Activated CD4-positive, alpha-beta T cell treated with anti-CD3 and anti-CD28 coated beads, Interleukin-2, amount 10 ng/mL, durations not matched to agents 24 days and 14 days (primary cell): ENCODE measurements at regions of chr4 and their contacts with region 1.

Region 1: DNA sequence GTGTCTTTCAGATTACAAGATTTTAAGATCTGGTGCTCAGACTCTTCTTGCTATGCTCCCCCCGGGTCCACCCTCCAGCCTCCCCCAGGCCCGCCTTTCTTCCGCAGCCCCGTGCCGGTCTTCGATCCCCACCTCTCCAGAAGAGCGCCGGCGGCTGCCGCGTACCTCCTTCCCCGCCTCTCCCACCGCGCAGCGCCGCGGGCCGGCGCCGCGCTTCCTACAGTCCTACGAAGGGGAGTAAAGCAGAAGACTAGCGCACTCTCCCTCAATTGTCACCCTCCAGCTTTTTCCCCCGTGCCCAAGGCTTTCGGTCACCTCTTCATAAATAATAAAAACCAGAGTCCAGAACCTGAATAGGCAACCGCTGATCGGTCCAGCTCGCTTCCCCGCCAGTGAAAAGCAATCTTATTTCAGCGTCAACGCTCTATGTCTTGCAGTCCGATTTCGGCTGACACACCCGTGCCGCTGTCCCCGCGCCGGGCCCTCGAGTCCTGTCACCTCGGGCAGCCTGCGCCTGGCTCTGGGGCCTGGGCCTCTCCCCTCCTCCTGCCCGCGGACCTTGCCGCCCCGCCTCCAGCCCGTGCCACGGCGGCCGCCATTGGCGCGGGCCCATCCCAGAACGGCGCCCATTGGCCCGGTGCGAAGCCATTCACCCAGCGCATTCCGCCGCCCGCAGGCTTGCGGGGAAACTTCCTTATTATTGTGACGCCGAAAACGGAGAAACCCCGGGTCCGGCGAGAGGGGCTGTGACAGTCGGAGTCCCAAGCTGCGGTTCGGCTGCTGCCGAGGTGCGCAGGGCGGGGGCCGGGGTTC is at the start of gene HERC3:
- DNase-seq: peak; percentile 98
- H3K4me3 Mint-ChIP-seq: peak within 1 kb of the TSS; percentile 90
- H3K27ac Mint-ChIP-seq: peak within 1 kb of the TSS; percentile 85
- H3K4me1 Mint-ChIP-seq: peaks cover 31% of the 10 kb centered on the region
- H3K27me3 Mint-ChIP-seq: peaks cover 17% of the 10 kb centered on the region
- total RNA-seq, gene HERC3: 18.8 and 18.9 TPM in 2 replicates

Region 2: GRCh38 chr4:88007304-88008121 is 584.5 kb before region 1 on chr4 and contains the start of gene PKD2:
- intact Hi-C with region 1: loop called (anchors 10 kb)
- DNase-seq: peak; percentile 96
- H3K4me3 Mint-ChIP-seq: peak within 1 kb of the TSS; percentile 94
- H3K27ac Mint-ChIP-seq: peak within 1 kb of the TSS; percentile 88
- H3K4me1 Mint-ChIP-seq: peaks cover 31% of the 10 kb centered on the region
- H3K27me3 Mint-ChIP-seq: peaks cover 16% of the 10 kb centered on the region
- total RNA-seq, gene PKD2: 10.1 and 12.3 TPM in 2 replicates

Region 3: DNA sequence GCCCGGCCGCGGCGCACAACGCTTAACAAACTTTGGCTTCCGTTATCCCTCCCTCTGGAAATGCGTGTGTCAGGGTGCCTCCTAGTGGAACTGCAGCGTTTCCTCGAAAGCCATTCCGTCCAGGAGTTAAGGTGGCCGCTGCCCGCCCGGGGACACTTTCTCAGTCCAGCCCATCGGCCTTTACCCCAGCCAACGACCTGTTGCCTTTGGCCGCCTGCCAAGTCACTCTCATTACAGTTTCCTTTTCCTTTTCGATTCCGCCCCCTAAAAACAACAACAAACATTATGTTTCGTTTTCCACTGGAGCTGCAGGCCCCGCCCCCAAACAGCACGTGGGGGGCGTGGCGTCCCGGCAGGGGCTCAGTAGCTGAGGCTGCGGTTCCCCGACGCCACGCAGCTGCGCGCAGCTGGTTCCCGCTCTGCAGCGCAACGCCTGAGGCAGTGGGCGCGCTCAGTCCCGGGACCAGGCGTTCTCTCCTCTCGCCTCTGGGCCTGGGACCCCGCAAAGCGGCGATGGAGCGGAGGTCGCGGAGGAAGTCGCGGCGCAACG is 135.2 kb before region 1 on chr4 and contains the start of gene HERC5:
- intact Hi-C with region 1: loop called (anchors 1 kb)
- DNase-seq: peak; percentile 98
- H3K4me3 Mint-ChIP-seq: peak within 1 kb of the TSS; percentile 93
- H3K27ac Mint-ChIP-seq: peak within 1 kb of the TSS; percentile 100
- H3K4me1 Mint-ChIP-seq: peaks cover 47% of the 10 kb centered on the region
- H3K27me3 Mint-ChIP-seq: no peaks in the 10 kb centered on the region
- total RNA-seq, gene HERC5: 18.1 and 19.7 TPM in 2 replicates

Region 4: GRCh38 chr4:88613417-88613875 is 21.5 kb after region 1 on chr4:
- intact Hi-C with region 1: loop called (anchors 2 kb)
- DNase-seq: peak; percentile 80
- H3K4me3 Mint-ChIP-seq: peak overlapping the region; percentile 73
- H3K27ac Mint-ChIP-seq: peak overlapping the region; percentile 73
- H3K4me1 Mint-ChIP-seq: peaks cover 53% of the 10 kb centered on the region
- H3K27me3 Mint-ChIP-seq: no peaks in the 10 kb centered on the region

Region 5: GRCh38 chr4:88880501-88881226 is 288.7 kb after region 1 on chr4:
- intact Hi-C with region 1: no loop called
- DNase-seq: no peak
- H3K4me3 Mint-ChIP-seq: no peak overlapping the region
- H3K27ac Mint-ChIP-seq: no peak overlapping the region
- H3K4me1 Mint-ChIP-seq: peaks cover 5% of the 10 kb centered on the region
- H3K27me3 Mint-ChIP-seq: peaks cover 21% of the 10 kb centered on the region

Region 6: DNA sequence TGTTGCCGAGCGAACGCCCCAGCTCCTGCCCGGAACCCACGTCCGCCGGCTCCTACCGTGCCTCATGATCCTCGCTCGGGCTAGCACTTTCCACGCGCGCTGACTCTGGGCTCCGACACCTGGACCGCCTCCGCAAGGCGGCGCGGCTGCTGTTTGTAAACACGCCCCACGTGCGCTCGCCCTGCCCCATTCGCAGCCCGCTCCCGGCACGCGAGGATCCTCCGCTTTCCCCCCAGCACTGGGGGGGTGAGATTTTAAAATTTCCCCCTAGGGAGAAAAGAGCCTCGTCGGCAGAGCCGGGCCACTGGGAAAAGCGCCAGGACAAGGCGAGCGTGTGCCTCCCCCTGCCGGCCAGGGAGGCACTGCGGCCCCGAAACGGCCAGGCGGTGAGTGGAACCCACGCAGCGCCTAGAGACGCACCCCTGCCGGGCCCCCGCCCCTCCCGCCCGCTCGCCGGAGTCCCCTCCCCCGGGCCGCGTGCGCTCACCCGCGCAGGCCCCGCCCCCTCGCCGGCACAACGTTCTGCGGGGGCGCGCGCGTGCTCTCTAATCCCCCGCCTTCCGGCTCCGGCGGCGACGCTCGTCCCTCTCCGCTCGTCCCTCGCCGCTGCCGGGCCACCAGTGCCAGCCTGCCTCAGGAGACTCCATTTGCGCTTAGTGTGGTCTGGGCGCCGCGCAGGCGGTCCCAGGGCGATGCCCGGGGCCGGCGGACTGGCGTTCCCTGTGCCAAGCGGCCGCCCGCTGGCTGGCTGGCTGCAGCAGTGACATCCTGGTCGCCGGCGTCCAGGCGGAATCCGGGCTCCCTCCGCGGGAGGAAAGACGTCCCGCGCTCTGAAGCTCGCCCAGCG is 519.2 kb after region 1 on chr4 and contains the start of gene TIGD2:
- intact Hi-C with region 1: loop called (anchors 2 kb)
- DNase-seq: peak; percentile 95
- H3K4me3 Mint-ChIP-seq: peak within 1 kb of the TSS; percentile 83
- H3K27ac Mint-ChIP-seq: peak within 1 kb of the TSS; percentile 76
- H3K4me1 Mint-ChIP-seq: peaks cover 22% of the 10 kb centered on the region
- H3K27me3 Mint-ChIP-seq: peaks cover 32% of the 10 kb centered on the region
- total RNA-seq, gene TIGD2: 2.6 and 3.5 TPM in 2 replicates